ENCODE measurements at regions of chr11 and their contacts with region 1.

Region 1: GRCh38 chr11:87583931-87584330 is 546.2 kb downstream of the TMEM135 start:
- DNase-seq: no peak
- ATAC-seq: no peak

Region 2: DNA sequence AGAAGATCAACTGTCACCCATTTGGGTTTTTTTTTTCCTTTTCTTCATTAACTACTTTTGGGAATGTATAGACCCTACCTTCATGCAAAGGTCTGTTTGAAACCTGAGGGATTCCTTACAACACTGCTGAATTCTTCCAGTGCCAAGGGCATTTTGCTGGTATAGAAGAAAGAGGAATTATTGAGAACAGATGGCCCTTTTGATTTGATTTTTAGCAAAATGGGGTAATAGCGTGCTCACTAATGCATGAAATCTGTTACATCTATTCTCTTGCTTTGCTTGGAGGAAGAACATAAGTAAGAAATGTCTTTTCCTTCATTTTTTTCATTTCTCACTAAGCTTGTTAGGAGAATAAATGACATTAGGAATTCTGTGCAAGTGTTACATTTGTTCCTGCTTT is 44.3 kb before region 1 on chr11:
- intact Hi-C with region 1: loop called in 1 of 2 experiments (anchors 10 kb)
- DNase-seq: no peak
- ATAC-seq: no peak

Region 3: GRCh38 chr11:87666730-87667129 is 82.8 kb after region 1 on chr11:
- intact Hi-C with region 1: no loop called
- DNase-seq: no peak
- ATAC-seq: no peak

Measured in left colon (tissue), 2 donors.